ENCODE measurements at regions of chr18 and their contacts with region 1.

Region 1: DNA sequence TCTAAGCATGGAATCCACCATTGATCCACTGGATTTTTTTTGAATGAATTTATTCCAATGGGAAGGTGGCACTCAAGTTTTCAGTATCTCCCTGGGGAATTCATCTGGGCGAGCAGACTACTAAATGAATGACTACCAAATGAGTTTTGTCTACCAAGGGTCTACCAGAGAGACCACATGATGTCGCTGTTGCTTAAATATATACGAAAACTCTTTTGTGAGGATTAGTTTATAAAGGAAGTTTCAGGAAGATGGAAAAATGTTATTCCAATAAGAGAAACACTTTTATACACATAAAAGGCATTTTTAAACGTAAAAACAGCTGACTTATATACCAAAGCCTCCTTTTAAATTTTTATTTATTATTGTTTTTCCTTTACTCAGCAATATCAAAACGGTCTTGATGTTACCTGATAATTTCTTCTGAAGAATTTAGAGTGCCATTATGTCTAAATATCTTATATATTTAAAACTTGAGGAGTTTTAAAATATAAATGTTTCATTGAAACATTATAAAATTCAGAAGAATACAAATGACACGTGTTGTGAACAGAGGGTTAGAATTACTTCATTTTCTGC is 139.7 kb downstream of the HRH4 start:
- DNase-seq: peak; percentile 6
- ATAC-seq: no peak
- H3K4me3 Mint-ChIP-seq: no peak overlapping the region
- H3K27ac Mint-ChIP-seq: no peak overlapping the region
- H3K4me1 Mint-ChIP-seq: no peaks in the 10 kb centered on the region
- H3K27me3 Mint-ChIP-seq: peaks cover 2% of the 10 kb centered on the region

Region 2: DNA sequence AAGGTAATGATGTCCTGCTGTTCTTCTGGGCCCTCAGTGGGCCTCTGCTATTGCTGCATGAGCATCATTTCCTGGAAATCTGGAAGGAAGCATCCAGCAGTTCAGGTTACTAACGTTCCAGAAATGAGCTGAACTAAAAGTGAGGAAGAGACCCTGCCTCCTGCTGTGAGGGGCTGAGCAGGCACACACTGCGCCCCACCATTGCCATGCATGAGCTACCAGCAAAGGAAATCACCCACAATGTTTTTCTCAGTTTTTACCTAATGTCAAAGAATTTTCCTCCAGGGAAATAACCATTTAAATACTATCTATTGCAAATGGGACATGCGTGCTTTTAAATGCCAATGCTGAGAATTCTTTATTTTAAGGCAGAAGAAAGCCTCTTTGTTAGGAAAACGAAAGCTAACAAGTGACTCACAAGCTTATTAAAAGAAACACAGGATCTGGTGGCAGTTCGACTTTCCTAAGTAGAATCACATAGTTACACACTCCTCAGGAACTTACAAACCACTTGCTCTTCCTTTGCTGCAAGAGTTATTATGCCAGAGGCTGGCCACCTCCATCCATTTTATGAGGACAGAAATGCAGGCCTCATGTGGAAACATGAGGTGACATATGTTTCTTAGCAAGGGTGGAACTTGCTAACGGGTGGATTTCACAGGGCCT is 738.2 kb before region 1 on chr18:
- CTCF ChIA-PET with region 1: no interaction called
- POLR2A ChIA-PET with region 1: no interaction called
- intact Hi-C with region 1: no loop called
- DNase-seq: no peak
- ATAC-seq: no peak
- H3K4me3 Mint-ChIP-seq: no peak overlapping the region
- H3K27ac Mint-ChIP-seq: peak overlapping the region; percentile 8
- H3K4me1 Mint-ChIP-seq: peaks cover 45% of the 10 kb centered on the region
- H3K27me3 Mint-ChIP-seq: no peaks in the 10 kb centered on the region

Region 3: DNA sequence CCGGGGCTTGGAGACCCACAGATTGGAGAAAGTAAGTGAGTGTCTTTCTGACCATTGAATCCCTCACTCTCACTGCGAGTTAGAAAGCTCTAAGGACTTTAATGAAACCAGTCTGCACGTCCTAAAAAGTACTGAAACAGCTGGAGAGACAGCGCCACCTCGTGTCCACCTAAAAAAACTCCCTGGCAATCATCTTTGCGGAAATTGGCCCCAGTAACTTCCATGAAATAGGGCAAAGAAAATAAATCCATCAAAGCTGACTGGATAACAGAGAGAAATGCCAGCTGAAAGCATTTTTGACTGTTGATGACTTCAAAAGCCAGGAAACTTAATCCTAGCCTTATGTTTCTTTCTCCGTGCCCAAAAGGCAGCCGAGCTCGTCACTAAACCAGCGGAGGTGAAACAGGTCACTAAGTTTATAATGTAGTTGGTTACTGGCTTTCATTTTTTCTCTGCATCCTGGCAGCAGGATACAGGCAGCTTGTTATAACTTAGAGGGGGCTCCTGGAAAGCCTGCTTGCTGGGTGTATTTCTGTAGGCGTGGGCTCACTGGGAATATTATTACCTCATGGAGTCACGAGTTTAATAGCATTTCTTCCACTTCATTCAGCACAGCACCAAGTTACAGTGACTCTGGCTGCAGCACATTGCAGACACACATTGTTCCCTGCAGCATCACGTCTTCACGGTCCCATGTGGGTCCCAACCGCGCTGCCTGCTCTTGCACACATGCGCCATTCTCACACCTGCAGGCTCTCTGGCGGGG is 126.7 kb after region 1 on chr18:
- CTCF ChIA-PET with region 1: interaction called, 33 read pairs
- POLR2A ChIA-PET with region 1: no interaction called
- intact Hi-C with region 1: loop called (anchors 1 kb)
- DNase-seq: peak; percentile 79
- ATAC-seq: no peak
- H3K4me3 Mint-ChIP-seq: no peak overlapping the region
- H3K27ac Mint-ChIP-seq: no peak overlapping the region
- H3K4me1 Mint-ChIP-seq: no peaks in the 10 kb centered on the region
- H3K27me3 Mint-ChIP-seq: peaks cover 5% of the 10 kb centered on the region

Region 4: DNA sequence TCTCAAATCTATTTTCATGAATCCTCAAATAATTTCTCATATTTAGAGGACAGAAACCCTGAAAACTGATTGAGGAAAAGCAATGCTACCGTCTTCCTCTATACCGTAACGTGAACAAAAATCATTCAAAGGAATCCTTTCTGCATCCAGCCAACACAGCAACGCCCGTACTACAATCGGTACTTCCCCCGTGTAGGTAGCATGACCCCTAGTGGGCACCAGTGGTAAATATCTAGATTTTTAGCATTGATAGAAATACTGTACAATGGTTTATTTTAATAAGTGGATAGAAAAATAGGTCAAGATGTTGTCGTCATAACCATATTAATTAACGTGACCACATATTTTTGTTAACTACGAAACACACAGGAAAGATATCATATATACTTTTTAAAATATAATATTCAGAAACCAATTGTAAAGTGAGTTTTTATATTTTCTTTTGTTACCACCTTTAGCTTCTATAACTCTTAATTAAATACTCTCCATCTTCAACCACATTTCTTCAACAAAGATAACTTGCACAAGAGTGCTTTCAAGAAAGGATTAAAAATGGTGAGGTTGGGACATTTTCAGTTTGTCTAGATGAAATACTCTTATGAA is 1296.1 kb after region 1 on chr18:
- CTCF ChIA-PET with region 1: no interaction called
- POLR2A ChIA-PET with region 1: no interaction called
- intact Hi-C with region 1: loop called in 1 of 2 experiments (anchors 10 kb)
- DNase-seq: peak; percentile 48
- ATAC-seq: peak; percentile 42
- H3K4me3 Mint-ChIP-seq: no peak overlapping the region
- H3K27ac Mint-ChIP-seq: no peak overlapping the region
- H3K4me1 Mint-ChIP-seq: no peaks in the 10 kb centered on the region
- H3K27me3 Mint-ChIP-seq: peaks cover 14% of the 10 kb centered on the region